ENCODE measurements at regions of chr3 and their contacts with region 1.

Region 1: GRCh38 chr3:185215873-185216606 is 37.8 kb downstream of the EHHADH start:
- DNase-seq: no peak
- ATAC-seq: peak; percentile 52; the same call in 2 of the 3 replicates
- H3K4me3 ChIP-seq: no peak overlapping the region
- H3K27ac ChIP-seq: no peak overlapping the region
- H3K4me1 ChIP-seq: no peaks in the 10 kb centered on the region
- H3K27me3 ChIP-seq: no peaks in the 10 kb centered on the region
- CTCF ChIP-seq: peak; percentile 37 to 60 (median 43); a peak in 4 of 6 replicates
- EP300 ChIP-seq: no peak
- POLR2A ChIP-seq: no peak
- RAD21 ChIP-seq: peak; percentile 82

Region 2: DNA sequence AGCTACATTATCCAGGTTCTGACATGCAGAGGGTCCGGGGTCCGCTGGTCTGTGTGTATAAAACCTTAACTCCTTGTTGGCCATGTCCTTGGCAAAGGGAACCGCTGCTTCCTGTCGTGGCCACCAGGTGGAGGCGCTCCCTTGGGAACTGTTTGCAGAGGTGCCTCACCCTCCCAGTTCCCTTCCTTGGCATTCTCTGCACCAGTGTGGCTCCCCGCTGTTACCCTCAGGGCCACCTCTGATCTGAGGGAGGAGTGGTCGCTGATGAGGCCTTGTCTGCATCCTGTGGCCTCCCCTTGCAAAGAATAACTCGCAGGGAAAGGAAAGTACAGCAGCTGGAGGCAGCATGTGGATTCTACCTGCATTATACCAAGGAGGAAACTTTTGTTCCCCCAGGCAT is 746.6 kb before region 1 on chr3:
- CTCF ChIA-PET with region 1: no interaction called
- POLR2A ChIA-PET with region 1: no interaction called
- RAD21 ChIA-PET with region 1: no interaction called
- SMC1A ChIA-PET with region 1: no interaction called
- in situ Hi-C with region 1: no loop called
- intact Hi-C with region 1: no loop called
- DNase-seq: no peak
- ATAC-seq: peak; percentile 78
- H3K4me3 ChIP-seq: no peak overlapping the region
- H3K27ac ChIP-seq: no peak overlapping the region
- H3K4me1 ChIP-seq: no peaks in the 10 kb centered on the region
- H3K27me3 ChIP-seq: peaks cover 3 to 6% of the 10 kb centered on the region in 2 experiments; a peak in 3 of 4 replicates
- CTCF ChIP-seq: peak; percentile 40 to 59 (median 48)
- EP300 ChIP-seq: no peak
- POLR2A ChIP-seq: no peak
- RAD21 ChIP-seq: peak; percentile 31; the same call in 1 of the 2 replicates

Region 3: DNA sequence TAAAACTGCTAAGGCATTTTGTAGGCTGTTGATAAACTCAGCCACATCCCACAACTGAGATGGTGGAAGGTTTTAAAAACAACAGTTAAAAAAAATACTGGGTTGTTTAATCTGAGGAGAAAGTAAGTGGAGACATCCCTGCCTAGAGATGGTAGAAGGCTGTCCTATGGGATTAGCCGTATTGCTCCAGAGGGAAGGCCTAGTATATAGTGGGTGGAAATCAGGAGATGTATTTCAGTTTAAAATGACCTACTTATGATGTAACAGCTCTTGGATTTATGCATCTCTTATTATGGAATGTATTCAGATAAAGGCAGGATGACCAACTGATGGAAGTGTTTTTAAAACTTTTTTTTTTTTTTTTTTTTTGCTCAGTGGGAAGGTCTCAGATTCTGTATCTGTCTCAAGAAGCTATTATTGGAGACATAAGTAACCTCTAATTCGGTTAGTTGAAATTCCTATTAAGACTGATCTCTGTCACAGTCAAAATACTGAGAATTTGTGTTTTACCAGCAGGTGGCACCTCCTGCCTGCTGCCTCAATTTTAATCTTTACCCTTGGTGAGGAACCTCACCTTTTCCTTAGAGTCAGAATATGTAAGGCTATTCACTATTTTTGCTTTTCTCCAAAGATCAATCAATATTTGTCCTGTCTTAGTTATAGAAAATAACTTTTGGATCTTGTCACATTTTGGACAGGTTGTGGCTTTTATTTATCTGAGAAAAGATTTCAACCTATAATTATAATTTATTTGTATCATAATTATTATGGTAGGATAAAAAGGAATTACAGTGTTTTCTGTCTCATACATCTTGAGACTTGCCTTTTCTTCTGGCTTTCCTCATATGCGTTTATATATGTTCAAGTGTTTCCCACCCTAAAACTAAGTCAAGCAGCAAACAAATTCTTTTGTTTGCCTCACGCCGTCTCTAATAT is 341.1 kb before region 1 on chr3:
- CTCF ChIA-PET with region 1: interaction called, 4 read pairs
- POLR2A ChIA-PET with region 1: no interaction called
- RAD21 ChIA-PET with region 1: no interaction called
- SMC1A ChIA-PET with region 1: interaction called, 4 read pairs
- in situ Hi-C with region 1: no loop called
- intact Hi-C with region 1: loop called (anchors 1 kb)
- DNase-seq: no peak
- ATAC-seq: peak; percentile 69
- H3K4me3 ChIP-seq: no peak overlapping the region
- H3K27ac ChIP-seq: no peak overlapping the region
- H3K4me1 ChIP-seq: no peaks in the 10 kb centered on the region
- H3K27me3 ChIP-seq: no peaks in the 10 kb centered on the region
- CTCF ChIP-seq: peak; percentile 51 to 73 (median 52); a peak in 5 of 6 replicates
- EP300 ChIP-seq: no peak
- POLR2A ChIP-seq: no peak
- RAD21 ChIP-seq: peak; percentile 88